ENCODE measurements at regions of chr21 and their contacts with region 1.

Region 1: DNA sequence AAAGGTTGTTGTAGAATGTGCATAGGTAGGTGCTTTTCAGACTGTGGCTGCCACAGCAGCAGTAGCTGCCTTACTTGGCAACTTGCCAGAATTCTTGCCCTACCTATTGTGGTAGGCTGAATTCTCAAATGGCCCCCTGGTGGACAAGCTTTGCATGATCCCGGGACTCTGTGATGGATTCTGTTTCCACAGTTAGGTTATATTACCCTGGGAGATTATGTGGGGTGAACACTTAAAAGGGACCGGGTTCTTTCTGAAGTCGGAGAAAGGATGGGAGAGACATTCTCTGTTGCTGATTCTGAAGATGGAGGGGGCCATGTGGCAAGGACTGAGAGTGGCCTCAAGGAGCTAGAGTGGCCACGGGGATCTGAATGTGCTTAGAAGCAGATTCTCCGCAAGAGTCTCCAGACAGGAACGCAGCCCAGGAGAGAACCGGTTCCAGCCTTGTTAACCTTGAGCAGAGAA is 32.1 kb upstream of the KCNE1 start:
- DNase-seq: peak; percentile 66
- ATAC-seq: peak; percentile 86
- H3K4me3 Mint-ChIP-seq: no peak overlapping the region
- H3K27ac Mint-ChIP-seq: no peak overlapping the region
- H3K4me1 Mint-ChIP-seq: peaks cover 9% of the 10 kb centered on the region
- H3K27me3 Mint-ChIP-seq: 0 out of 2 replicates have a peak, but pooled peaks cover 6% of the 10 kb centered on the region
- CTCF ChIP-seq: peak; percentile 58

Region 2: DNA sequence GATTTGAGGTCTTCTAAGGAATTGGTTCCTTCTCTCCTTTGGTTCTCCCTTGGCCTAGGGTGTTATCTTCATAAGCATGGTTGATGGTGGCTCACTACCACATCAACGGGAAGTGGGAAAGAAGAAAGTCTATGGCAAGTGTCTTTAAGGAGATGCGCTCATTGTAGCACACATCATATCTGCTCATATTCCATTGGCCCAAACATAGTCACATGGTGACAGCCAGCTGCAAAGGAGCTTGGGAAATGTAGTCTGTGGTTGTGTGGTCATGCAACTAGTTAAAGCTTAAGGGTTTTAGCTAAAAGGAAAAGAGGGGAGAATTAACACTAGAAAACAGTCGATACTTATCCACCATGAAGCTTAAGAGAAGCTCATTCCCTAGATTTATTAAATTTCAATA is 482.1 kb before region 1 on chr21:
- CTCF ChIA-PET with region 1: no interaction called
- POLR2A ChIA-PET with region 1: no interaction called
- DNase-seq: no peak
- ATAC-seq: peak; percentile 92
- H3K4me3 Mint-ChIP-seq: no peak overlapping the region
- H3K27ac Mint-ChIP-seq: no peak overlapping the region
- H3K4me1 Mint-ChIP-seq: no peaks in the 10 kb centered on the region
- H3K27me3 Mint-ChIP-seq: peaks cover 2% of the 10 kb centered on the region
- CTCF ChIP-seq: no peak

Region 3: DNA sequence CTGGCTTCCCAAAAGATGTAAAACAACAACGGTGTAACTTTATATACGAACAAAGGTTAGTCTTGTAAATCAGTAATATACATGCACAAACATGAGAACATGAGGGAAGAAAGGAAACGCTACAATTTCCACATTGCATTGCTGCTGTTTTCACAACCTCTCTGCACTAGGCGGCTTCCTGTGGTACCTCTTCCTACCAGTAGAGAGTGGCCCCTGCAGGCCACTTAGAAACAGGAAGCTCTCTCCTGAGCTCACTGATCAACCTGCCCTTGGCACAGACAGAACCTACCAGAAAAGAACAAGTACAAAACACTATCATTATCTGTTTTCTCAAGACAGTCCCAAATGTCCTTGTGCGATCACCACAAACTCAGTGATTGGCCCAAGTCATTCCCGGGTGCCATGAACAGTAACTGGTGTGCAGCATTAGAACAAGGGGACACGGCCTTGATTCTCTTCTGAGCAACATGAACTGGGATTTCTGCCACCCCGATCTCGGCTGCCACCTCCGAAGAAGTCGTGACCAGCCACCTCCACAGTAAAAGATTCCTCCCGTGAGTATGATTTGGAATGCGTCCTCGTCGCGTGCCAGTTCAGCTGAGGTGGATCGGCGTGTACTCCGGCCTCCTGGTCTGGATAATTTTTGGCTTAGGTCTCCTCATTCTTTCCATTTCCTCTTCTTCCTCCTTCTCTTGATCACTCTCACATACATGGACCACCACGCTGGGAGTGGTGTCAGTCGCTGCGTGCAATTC is 26.4 kb before region 1 on chr21:
- CTCF ChIA-PET with region 1: interaction called, 20 read pairs
- POLR2A ChIA-PET with region 1: interaction called, 3 read pairs
- DNase-seq: no peak
- ATAC-seq: peak; percentile 94
- H3K4me3 Mint-ChIP-seq: no peak overlapping the region
- H3K27ac Mint-ChIP-seq: peak overlapping the region; percentile 48; the same call in 1 of the 2 replicates
- H3K4me1 Mint-ChIP-seq: peaks cover 34% of the 10 kb centered on the region
- H3K27me3 Mint-ChIP-seq: no peaks in the 10 kb centered on the region; the same call in 1 of the 2 replicates
- CTCF ChIP-seq: no peak

Region 4: GRCh38 chr21:34526618-34527290 is 17.3 kb before region 1 on chr21:
- CTCF ChIA-PET with region 1: interaction called, 14 read pairs
- POLR2A ChIA-PET with region 1: interaction called, 5 read pairs
- DNase-seq: peak; percentile 42
- ATAC-seq: peak; percentile 53
- H3K4me3 Mint-ChIP-seq: peak overlapping the region; percentile 12; the same call in 1 of the 2 replicates
- H3K27ac Mint-ChIP-seq: peak overlapping the region; percentile 89
- H3K4me1 Mint-ChIP-seq: peaks cover 68% of the 10 kb centered on the region
- H3K27me3 Mint-ChIP-seq: peaks cover 6% of the 10 kb centered on the region
- CTCF ChIP-seq: no peak

Region 5: GRCh38 chr21:34754690-34755647 is 210.9 kb after region 1 on chr21:
- CTCF ChIA-PET with region 1: no interaction called
- POLR2A ChIA-PET with region 1: no interaction called
- DNase-seq: no peak
- ATAC-seq: no peak
- H3K4me3 Mint-ChIP-seq: no peak overlapping the region
- H3K27ac Mint-ChIP-seq: no peak overlapping the region
- H3K4me1 Mint-ChIP-seq: no peaks in the 10 kb centered on the region
- H3K27me3 Mint-ChIP-seq: no peaks in the 10 kb centered on the region; the same call in 1 of the 2 replicates
- CTCF ChIP-seq: no peak

Measured in WTC11 (cell line).